ENCODE measurements at regions of chr5 and their contacts with region 1.

Region 1: DNA sequence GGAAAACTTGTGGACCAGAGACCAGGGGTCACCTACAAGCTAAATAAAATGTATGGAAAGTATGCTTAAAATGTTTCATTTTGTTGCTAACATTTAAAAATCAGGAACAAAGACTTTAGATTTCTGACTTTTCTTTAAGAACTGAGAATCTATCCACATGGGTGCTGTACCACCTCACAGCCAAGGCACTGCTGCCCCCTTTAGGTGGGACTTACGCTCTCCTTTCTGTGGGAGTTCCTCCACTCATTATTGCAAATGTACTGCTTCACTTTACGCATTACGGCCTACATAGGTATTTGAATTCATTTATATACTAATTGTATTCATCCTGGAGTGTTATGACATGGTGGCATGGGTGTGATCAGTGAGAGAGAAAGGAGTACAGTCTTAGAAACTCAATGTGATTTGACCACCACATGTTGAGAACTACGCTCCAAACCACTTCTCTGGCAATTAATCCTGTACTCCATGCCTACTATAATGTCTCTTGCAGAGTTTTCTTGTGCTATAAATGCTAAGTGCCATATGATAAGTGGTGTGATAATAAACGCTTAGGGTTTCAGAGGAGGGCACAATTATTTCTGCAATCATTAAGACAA is 24.7 kb upstream of the CETN3 start:
- DNase-seq: peak; percentile 29 to 77 (median 44)
- ATAC-seq: peak; percentile 98
- H3K4me3 ChIP-seq: no peak overlapping the region
- H3K27ac ChIP-seq: no peak overlapping the region
- H3K4me1 ChIP-seq: no peaks in the 10 kb centered on the region
- H3K27me3 ChIP-seq: no peaks in the 10 kb centered on the region
- CTCF ChIP-seq: peak; percentile 79 to 90 (median 87)
- EP300 ChIP-seq: no peak
- POLR2A ChIP-seq: no peak
- RAD21 ChIP-seq: peak; percentile 58 to 85

Region 2: GRCh38 chr5:90153031-90153430 is 281.2 kb before region 1 on chr5:
- CTCF ChIA-PET with region 1: no interaction called
- POLR2A ChIA-PET with region 1: no interaction called
- in situ Hi-C with region 1: no loop called
- intact Hi-C with region 1: no loop called
- DNase-seq: no peak
- ATAC-seq: no peak
- H3K4me3 ChIP-seq: no peak overlapping the region
- H3K27ac ChIP-seq: no peak overlapping the region
- H3K4me1 ChIP-seq: no peaks in the 10 kb centered on the region
- H3K27me3 ChIP-seq: no peaks in the 10 kb centered on the region
- CTCF ChIP-seq: no peak
- EP300 ChIP-seq: no peak
- POLR2A ChIP-seq: no peak
- RAD21 ChIP-seq: no peak

Region 3: DNA sequence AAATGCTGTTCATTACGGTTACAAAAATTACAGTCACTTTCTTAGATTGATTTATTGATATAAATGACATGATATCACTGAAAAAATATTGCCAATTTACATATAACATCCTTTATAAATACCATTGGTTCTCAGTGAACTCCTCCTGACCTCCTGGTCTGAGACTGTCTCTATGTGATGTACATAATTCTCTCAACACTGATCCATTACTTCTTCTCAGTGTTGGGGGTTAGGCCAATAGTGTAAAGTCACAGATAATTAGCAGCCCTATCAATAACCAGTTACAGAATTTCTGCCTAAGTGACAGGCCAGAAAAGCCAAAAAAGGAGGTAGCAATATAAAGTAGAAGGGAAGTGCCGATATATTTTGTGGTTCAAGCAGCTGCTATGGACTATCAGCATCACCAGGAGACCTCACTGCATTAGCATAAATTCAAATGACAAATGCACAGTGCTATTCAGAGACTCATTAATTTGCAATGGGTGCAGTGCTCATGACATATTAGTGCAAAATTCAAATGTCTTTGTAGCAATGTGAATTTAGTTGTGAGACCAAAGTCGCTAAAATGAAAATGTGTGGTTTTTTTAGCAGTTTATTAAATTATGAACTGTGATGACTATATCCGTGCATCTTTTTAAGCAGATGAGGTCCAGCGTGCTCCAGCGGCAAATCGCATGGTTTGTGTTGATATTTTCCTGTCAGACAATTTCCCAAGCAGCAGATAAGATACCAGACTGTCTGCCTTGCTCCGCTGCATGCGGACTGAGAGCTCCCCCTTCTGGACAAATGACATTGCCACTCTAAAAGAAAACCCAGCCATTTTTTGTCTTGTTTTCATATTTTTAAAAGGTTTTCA is 169.3 kb before region 1 on chr5:
- CTCF ChIA-PET with region 1: interaction called, 3 read pairs
- POLR2A ChIA-PET with region 1: no interaction called
- in situ Hi-C with region 1: no loop called
- intact Hi-C with region 1: loop called (anchors 5 kb)
- DNase-seq: peak; percentile 34 to 82 (median 46)
- ATAC-seq: peak; percentile 87
- H3K4me3 ChIP-seq: no peak overlapping the region
- H3K27ac ChIP-seq: no peak overlapping the region
- H3K4me1 ChIP-seq: no peaks in the 10 kb centered on the region
- H3K27me3 ChIP-seq: no peaks in the 10 kb centered on the region; a peak in 1 of 5 replicates
- CTCF ChIP-seq: peak; percentile 84 to 95 (median 90)
- EP300 ChIP-seq: no peak
- POLR2A ChIP-seq: no peak
- RAD21 ChIP-seq: peak; percentile 93

Region 4: GRCh38 chr5:90421136-90421535 is 13.1 kb before region 1 on chr5:
- CTCF ChIA-PET with region 1: no interaction called
- POLR2A ChIA-PET with region 1: interaction called, 11 read pairs
- in situ Hi-C with region 1: no loop called
- intact Hi-C with region 1: no loop called
- DNase-seq: peak in 2 of 4 experiments; percentile 21 to 48
- ATAC-seq: peak; percentile 95
- H3K4me3 ChIP-seq: no peak overlapping the region
- H3K27ac ChIP-seq: no peak overlapping the region
- H3K4me1 ChIP-seq: no peaks in the 10 kb centered on the region
- H3K27me3 ChIP-seq: no peaks in the 10 kb centered on the region
- CTCF ChIP-seq: peak; percentile 53 to 60 (median 55)
- EP300 ChIP-seq: no peak
- POLR2A ChIP-seq: no peak
- RAD21 ChIP-seq: peak; percentile 6 to 57; a peak in 2 of 4 replicates

Region 5: DNA sequence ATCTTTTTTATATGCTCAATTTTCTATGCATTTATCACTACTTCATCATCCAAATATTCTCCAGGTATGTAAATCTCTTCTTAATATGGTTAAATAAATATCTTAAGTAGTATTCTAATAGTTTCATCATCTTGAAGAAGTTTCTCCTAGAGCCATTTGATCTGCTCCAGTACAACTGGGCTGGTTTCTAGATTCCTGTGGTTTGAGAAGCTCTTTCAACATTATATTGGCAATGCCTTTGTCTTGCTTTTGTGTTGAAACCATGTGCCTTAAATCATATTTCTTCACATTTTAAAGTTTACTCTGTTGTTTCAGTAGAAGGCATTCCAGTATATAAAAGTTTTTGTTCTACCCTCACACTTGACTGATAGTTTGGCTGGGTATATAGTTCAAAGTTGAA is 12.7 kb after region 1 on chr5:
- CTCF ChIA-PET with region 1: no interaction called
- POLR2A ChIA-PET with region 1: no interaction called
- in situ Hi-C with region 1: no loop called
- intact Hi-C with region 1: no loop called
- DNase-seq: no peak
- ATAC-seq: no peak
- H3K4me3 ChIP-seq: no peak overlapping the region
- H3K27ac ChIP-seq: no peak overlapping the region
- H3K4me1 ChIP-seq: no peaks in the 10 kb centered on the region
- H3K27me3 ChIP-seq: no peaks in the 10 kb centered on the region
- CTCF ChIP-seq: no peak
- EP300 ChIP-seq: no peak
- POLR2A ChIP-seq: no peak
- RAD21 ChIP-seq: no peak

Region 6: GRCh38 chr5:90606539-90606938 is 172.3 kb after region 1 on chr5:
- CTCF ChIA-PET with region 1: interaction called, 10 read pairs
- POLR2A ChIA-PET with region 1: no interaction called
- in situ Hi-C with region 1: loop called (anchors 10 kb)
- intact Hi-C with region 1: loop called (anchors 1 kb)
- DNase-seq: peak; percentile 24 to 74 (median 40)
- ATAC-seq: peak; percentile 74
- H3K4me3 ChIP-seq: no peak overlapping the region
- H3K27ac ChIP-seq: peak overlapping the region; percentile 34
- H3K4me1 ChIP-seq: peaks cover 0 to 13% of the 10 kb centered on the region in 2 experiments; a peak in 2 of 5 replicates
- H3K27me3 ChIP-seq: no peaks in the 10 kb centered on the region
- CTCF ChIP-seq: peak; percentile 56 to 77 (median 70); a peak in 5 of 6 replicates
- EP300 ChIP-seq: no peak
- POLR2A ChIP-seq: no peak
- RAD21 ChIP-seq: peak; percentile 79 to 93

Measured in K562 (cell line).